ENCODE measurements at regions of chr12 and their contacts with region 1.

Region 1: GRCh38 chr12:99059824-99060511 is 414.9 kb downstream of the APAF1 start:
- DNase-seq: no peak
- ATAC-seq: no peak
- H3K4me3 ChIP-seq: no peak overlapping the region
- H3K27ac ChIP-seq: no peak overlapping the region
- H3K4me1 ChIP-seq: no peaks in the 10 kb centered on the region
- H3K27me3 ChIP-seq: no peaks in the 10 kb centered on the region
- CTCF ChIP-seq: no peak

Region 2: GRCh38 chr12:98431089-98431488 is 628.9 kb before region 1 on chr12:
- CTCF ChIA-PET with region 1: no interaction called
- POLR2A ChIA-PET with region 1: interaction called, 13 read pairs
- in situ Hi-C with region 1: no loop called
- intact Hi-C with region 1: no loop called
- DNase-seq: no peak
- ATAC-seq: no peak
- H3K4me3 ChIP-seq: no peak overlapping the region
- H3K27ac ChIP-seq: no peak overlapping the region
- H3K4me1 ChIP-seq: no peaks in the 10 kb centered on the region
- H3K27me3 ChIP-seq: no peaks in the 10 kb centered on the region
- CTCF ChIP-seq: no peak

Region 3: GRCh38 chr12:98736352-98737321 is 323.3 kb before region 1 on chr12:
- CTCF ChIA-PET with region 1: no interaction called
- POLR2A ChIA-PET with region 1: no interaction called
- in situ Hi-C with region 1: no loop called
- intact Hi-C with region 1: no loop called
- DNase-seq: no peak
- ATAC-seq: no peak; the same call in 1 of the 2 replicates
- H3K4me3 ChIP-seq: no peak overlapping the region
- H3K27ac ChIP-seq: no peak overlapping the region
- H3K4me1 ChIP-seq: no peaks in the 10 kb centered on the region
- H3K27me3 ChIP-seq: no peaks in the 10 kb centered on the region
- CTCF ChIP-seq: no peak

Region 4: DNA sequence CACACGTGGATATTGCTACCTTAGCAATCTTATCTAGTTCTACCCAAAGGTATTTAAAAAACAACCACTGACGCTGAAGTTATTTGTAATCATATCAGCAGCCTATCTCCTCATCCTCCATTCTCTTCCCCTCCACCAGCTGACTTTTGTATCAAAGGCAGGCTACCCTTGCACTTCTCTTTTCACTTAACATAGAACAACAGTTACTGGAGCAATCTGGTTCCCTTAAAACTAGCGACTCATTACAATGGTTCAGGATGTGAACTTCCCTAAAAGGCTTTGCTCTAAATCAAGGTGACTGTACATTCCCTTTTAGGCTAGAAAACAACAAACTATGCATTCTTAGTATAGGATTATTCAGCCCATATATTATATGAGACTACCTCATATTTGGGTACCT is 10.2 kb before region 1 on chr12:
- CTCF ChIA-PET with region 1: no interaction called
- POLR2A ChIA-PET with region 1: no interaction called
- in situ Hi-C with region 1: no loop called
- intact Hi-C with region 1: no loop called
- DNase-seq: no peak
- ATAC-seq: no peak
- H3K4me3 ChIP-seq: no peak overlapping the region
- H3K27ac ChIP-seq: no peak overlapping the region
- H3K4me1 ChIP-seq: no peaks in the 10 kb centered on the region
- H3K27me3 ChIP-seq: no peaks in the 10 kb centered on the region
- CTCF ChIP-seq: no peak

Region 5: GRCh38 chr12:99092100-99092851 is 32.3 kb after region 1 on chr12:
- CTCF ChIA-PET with region 1: no interaction called
- POLR2A ChIA-PET with region 1: no interaction called
- in situ Hi-C with region 1: no loop called
- intact Hi-C with region 1: no loop called
- DNase-seq: no peak
- ATAC-seq: no peak
- H3K4me3 ChIP-seq: no peak overlapping the region
- H3K27ac ChIP-seq: no peak overlapping the region
- H3K4me1 ChIP-seq: no peaks in the 10 kb centered on the region
- H3K27me3 ChIP-seq: no peaks in the 10 kb centered on the region
- CTCF ChIP-seq: no peak

Region 6: GRCh38 chr12:99232324-99232723 is 172.4 kb after region 1 on chr12:
- CTCF ChIA-PET with region 1: no interaction called
- POLR2A ChIA-PET with region 1: no interaction called
- in situ Hi-C with region 1: no loop called
- intact Hi-C with region 1: no loop called
- DNase-seq: no peak
- ATAC-seq: no peak
- H3K4me3 ChIP-seq: no peak overlapping the region
- H3K27ac ChIP-seq: no peak overlapping the region
- H3K4me1 ChIP-seq: no peaks in the 10 kb centered on the region
- H3K27me3 ChIP-seq: no peaks in the 10 kb centered on the region
- CTCF ChIP-seq: no peak